Calu3 (cell line): ENCODE measurements at regions of chrX and their contacts with region 1.

Region 1: DNA sequence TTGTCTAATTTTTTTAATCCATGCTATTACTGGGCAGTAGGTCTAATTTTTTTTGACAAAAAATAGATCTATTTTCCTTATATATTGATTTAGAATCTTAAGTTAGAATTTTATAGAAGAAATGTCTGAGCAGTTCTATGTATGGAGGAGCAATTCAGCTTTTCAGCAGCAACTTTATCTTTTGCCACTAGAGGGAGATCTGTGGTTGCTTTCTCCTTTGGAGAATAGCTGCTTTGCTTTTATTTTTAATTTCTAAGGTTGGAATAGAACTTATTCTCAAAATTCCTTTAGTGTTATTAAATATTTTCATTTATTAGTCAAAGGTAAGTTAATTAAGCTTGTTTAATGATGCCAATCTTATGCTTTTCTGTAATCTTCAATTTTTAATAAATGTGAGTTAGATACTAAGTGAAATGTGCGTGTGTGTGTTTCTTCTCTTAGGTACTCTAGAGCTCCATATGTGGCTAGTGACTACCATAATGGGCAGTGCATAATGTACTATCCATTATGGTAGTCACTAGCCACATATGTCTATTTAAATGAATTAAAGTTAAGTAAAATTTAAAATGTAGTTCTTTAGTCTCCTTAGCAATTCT is 29.3 kb downstream of the FAM199X start:
- DNase-seq: peak; percentile 20
- H3K4me3 Mint-ChIP-seq: no peak overlapping the region
- H3K27ac Mint-ChIP-seq: no peak overlapping the region
- H3K4me1 Mint-ChIP-seq: no peaks in the 10 kb centered on the region
- H3K27me3 Mint-ChIP-seq: no peaks in the 10 kb centered on the region
- CTCF ChIP-seq: peak; percentile 28

Region 2: GRCh38 chrX:103789004-103789403 is 406.6 kb before region 1 on chrX:
- CTCF ChIA-PET with region 1: no interaction called
- intact Hi-C with region 1: no loop called
- DNase-seq: no peak
- H3K4me3 Mint-ChIP-seq: no peak overlapping the region
- H3K27ac Mint-ChIP-seq: no peak overlapping the region
- H3K4me1 Mint-ChIP-seq: no peaks in the 10 kb centered on the region
- H3K27me3 Mint-ChIP-seq: peaks cover 91% of the 10 kb centered on the region
- CTCF ChIP-seq: no peak

Region 3: GRCh38 chrX:104253567-104254441 is 58.2 kb after region 1 on chrX:
- CTCF ChIA-PET with region 1: no interaction called
- intact Hi-C with region 1: loop called (anchors 5 kb)
- DNase-seq: no peak
- H3K4me3 Mint-ChIP-seq: peak overlapping the region; percentile 82
- H3K27ac Mint-ChIP-seq: no peak overlapping the region
- H3K4me1 Mint-ChIP-seq: peaks cover 17% of the 10 kb centered on the region
- H3K27me3 Mint-ChIP-seq: peaks cover 15% of the 10 kb centered on the region
- CTCF ChIP-seq: no peak

Region 4: DNA sequence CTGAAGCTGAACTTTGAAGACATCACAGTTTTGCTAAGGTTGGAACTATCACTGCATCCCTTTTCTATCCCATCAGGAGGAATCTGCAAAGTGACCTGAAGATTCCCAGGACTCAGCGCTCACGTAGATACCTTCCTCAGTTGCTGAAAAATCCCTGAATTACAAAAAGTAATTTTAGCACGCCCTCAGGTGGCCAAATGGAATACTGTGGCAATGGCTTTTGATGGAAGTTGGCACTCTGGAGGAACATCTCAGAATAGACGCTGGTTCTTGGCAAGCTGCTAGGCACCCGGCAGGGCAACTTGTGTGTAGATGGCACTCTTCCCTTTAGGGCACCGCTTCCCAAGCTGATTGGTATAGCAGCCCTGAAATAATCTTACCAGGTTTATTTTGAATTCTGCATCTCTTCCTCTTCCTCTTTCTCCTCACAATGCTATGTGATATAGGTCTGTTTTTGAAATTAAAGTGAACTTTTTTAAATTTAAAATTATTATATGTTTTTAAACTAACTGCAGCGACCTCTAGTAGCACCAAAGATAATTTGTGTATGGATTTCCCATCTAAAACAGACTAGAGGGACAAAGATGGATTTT is 75.4 kb after region 1 on chrX:
- CTCF ChIA-PET with region 1: interaction called, 5 read pairs
- intact Hi-C with region 1: loop called (anchors 1 kb)
- DNase-seq: peak; percentile 58
- H3K4me3 Mint-ChIP-seq: no peak overlapping the region
- H3K27ac Mint-ChIP-seq: no peak overlapping the region
- H3K4me1 Mint-ChIP-seq: no peaks in the 10 kb centered on the region
- H3K27me3 Mint-ChIP-seq: peaks cover 14% of the 10 kb centered on the region
- CTCF ChIP-seq: peak; percentile 18